ENCODE measurements at regions of chr3 and their contacts with region 1.

Region 1: GRCh38 chr3:133927540-133928066 is 31.9 kb upstream of the RAB6B start:
- DNase-seq: peak; percentile 93
- H3K4me3 ChIP-seq: peak overlapping the region; percentile 30 to 75 (median 44)
- H3K27ac ChIP-seq: peak overlapping the region in 1 of 8 donors; percentile 13
- H3K4me1 ChIP-seq: peaks cover 7 to 18% (median 15%) of the 10 kb centered on the region in 6 donors
- H3K27me3 ChIP-seq: peaks cover 0 to 23% (median 0%) of the 10 kb centered on the region in 7 donors
- CTCF ChIP-seq: peak; percentile 28 to 92 (median 71)
- POLR2A ChIP-seq: no peak

Region 2: DNA sequence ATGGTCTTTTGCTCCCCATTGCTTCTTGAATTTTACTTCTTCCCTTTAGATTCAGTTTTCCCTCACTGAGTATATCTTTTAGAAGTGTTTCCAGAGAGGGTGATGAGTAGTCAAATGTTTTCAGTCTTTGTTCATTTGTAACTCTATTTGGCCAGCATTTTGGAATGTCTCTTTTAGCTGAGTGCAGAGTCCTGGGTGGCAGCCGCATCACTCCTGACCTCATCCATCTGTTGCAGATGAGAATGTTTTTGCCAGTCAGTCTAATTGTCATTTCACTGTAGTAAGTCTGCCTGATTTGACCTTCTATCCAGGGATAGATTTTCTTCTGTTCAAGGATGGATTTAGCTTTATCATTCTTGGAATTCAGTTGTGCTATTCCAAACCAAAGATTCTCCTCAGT is 114.7 kb before region 1 on chr3:
- intact Hi-C with region 1: loop called (anchors 5 kb)
- DNase-seq: no peak
- H3K4me3 ChIP-seq: no peak overlapping the region
- H3K27ac ChIP-seq: no peak overlapping the region
- H3K4me1 ChIP-seq: peaks cover 0 to 9% (median 0%) of the 10 kb centered on the region in 6 donors
- H3K27me3 ChIP-seq: no peaks in the 10 kb centered on the region
- CTCF ChIP-seq: no peak
- POLR2A ChIP-seq: no peak

Region 3: GRCh38 chr3:134212906-134213665 is 285.5 kb after region 1 on chr3:
- intact Hi-C with region 1: loop called (anchors 5 kb)
- DNase-seq: peak; percentile 92
- H3K4me3 ChIP-seq: no peak overlapping the region
- H3K27ac ChIP-seq: no peak overlapping the region
- H3K4me1 ChIP-seq: peaks cover 0 to 60% (median 15%) of the 10 kb centered on the region in 6 donors
- H3K27me3 ChIP-seq: no peaks in the 10 kb centered on the region
- CTCF ChIP-seq: peak; percentile 76 to 93 (median 87)
- POLR2A ChIP-seq: no peak

Measured in spleen (tissue), 13 donors.